Activated naive CD4-positive, alpha-beta T cell treated with anti-CD3 and anti-CD28 coated beads for 36 hours (primary cell): ENCODE measurements at regions of chr2 and their contacts with region 1.

Region 1: GRCh38 chr2:216081487-216082116 is at the starts of genes PECR and TMEM169:
- DNase-seq: peak; percentile 83
- H3K4me3 Mint-ChIP-seq: peak within 1 kb of the TSS; percentile 87
- H3K27ac Mint-ChIP-seq: peak within 1 kb of the TSS; percentile 75
- H3K4me1 Mint-ChIP-seq: peaks cover 58% of the 10 kb centered on the region
- H3K27me3 Mint-ChIP-seq: no peaks in the 10 kb centered on the region
- total RNA-seq, gene PECR: 18.8 to 20.9 TPM
- total RNA-seq, gene TMEM169: 0.57 to 0.81 TPM

Region 2: DNA sequence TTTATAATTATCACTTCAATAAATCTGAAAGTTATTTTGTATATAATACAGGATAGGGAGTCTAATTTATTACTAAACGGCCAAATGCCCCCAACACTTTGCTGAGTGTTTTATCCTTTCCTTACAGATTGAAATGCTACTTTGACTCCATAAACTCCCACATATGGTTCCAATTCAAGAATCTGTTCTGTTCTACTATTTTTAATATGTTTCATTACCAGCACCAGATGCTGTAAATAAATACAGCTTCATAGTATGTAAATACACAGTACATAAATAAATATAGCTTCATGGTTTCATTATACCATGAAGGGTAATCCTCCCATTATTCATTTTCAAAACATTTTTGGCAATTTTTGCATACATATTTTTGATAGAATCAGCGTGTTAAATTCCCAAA is 34.2 kb before region 1 on chr2:
- CTCF ChIA-PET with region 1: no interaction called
- intact Hi-C with region 1: no loop called
- DNase-seq: no peak
- H3K4me3 Mint-ChIP-seq: no peak overlapping the region
- H3K27ac Mint-ChIP-seq: no peak overlapping the region
- H3K4me1 Mint-ChIP-seq: peaks cover 6% of the 10 kb centered on the region
- H3K27me3 Mint-ChIP-seq: no peaks in the 10 kb centered on the region

Region 3: DNA sequence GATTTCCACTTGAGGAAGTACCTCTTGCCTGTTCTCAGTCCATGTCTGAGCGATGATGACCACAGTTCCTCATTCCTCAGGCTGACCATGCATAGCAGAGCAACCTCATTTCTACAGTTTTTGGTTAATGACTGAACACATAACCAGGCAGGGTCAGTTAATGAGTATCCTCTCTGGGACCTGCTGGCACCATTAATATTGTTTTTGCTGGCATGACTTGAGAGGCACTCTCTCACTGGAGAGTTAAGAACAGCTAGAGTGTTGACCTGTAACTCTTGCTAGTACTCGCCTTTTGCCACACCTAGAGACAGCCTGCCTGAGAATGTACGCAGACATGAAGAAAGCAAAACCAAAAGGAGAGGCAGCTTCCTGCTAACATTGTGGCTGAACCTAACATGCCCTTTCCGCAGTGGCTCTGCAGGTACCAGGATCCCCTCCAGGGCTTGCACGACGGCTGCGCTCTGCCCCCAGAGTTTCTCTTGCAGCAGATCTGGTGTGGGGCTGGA is 23.9 kb before region 1 on chr2:
- CTCF ChIA-PET with region 1: interaction called, 8 read pairs
- intact Hi-C with region 1: loop called (anchors 2 kb)
- DNase-seq: peak; percentile 66
- H3K4me3 Mint-ChIP-seq: peak overlapping the region; percentile 65
- H3K27ac Mint-ChIP-seq: peak overlapping the region; percentile 81
- H3K4me1 Mint-ChIP-seq: peaks cover 24% of the 10 kb centered on the region
- H3K27me3 Mint-ChIP-seq: no peaks in the 10 kb centered on the region

Region 4: GRCh38 chr2:216498418-216499413 is 417.1 kb after region 1 on chr2 and contains the start of gene RPL37A:
- CTCF ChIA-PET with region 1: no interaction called
- intact Hi-C with region 1: loop called (anchors 1 kb)
- DNase-seq: peak; percentile 93
- H3K4me3 Mint-ChIP-seq: peak within 1 kb of the TSS; percentile 94
- H3K27ac Mint-ChIP-seq: peak within 1 kb of the TSS; percentile 94
- H3K4me1 Mint-ChIP-seq: peaks cover 51% of the 10 kb centered on the region
- H3K27me3 Mint-ChIP-seq: no peaks in the 10 kb centered on the region
- total RNA-seq, gene RPL37A: 4,869 to 4,871 TPM